HCT116 (cell line): ENCODE measurements at regions of chr6 and their contacts with region 1.

Region 1: DNA sequence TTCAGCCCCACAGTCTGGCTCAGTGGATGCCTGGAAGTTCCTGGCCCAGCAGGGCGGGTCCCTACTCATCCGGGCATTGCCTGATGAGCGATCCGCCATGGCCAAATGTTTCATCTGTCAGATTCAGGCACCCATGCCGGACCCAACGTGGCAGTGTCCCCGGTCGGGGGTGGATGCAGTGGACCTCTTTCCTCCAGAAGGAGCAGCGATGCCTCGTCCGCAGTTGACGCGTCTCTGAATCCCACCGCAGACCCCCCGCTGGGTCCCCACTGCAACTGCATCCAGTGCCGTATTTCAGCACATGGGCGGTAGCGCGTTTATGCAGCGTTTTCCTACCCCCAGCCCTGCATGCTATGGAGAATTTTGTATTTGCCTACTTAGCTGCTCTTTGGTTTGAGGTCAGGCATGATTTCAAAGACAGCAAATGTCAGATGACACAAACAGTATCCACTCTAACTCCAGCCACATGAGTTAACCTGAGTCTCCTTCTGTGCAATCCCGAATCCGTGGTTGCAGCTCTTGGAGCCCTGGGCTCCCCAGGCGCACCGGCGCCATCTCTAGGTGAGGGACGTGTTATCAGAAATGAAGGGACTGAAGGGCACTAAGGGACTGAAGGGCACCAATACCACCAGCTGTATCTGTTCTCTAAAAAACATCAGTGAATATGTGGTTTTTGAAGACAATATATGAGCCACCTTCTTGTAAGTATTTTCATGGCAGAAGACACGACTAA is 72.6 kb upstream of the THBS2 start:
- DNase-seq: peak; percentile 44
- ATAC-seq: peak; percentile 92
- H3K4me3 ChIP-seq: no peak overlapping the region
- H3K27ac ChIP-seq: no peak overlapping the region
- H3K4me1 ChIP-seq: no peaks in the 10 kb centered on the region
- H3K27me3 ChIP-seq: no peaks in the 10 kb centered on the region
- CTCF ChIP-seq: peak; percentile 68 to 87 (median 77)
- POLR2A ChIP-seq: no peak
- RAD21 ChIP-seq: peak; percentile 95

Region 2: GRCh38 chr6:168895102-168895812 is 431.0 kb before region 1 on chr6:
- CTCF ChIA-PET with region 1: no interaction called
- POLR2A ChIA-PET with region 1: no interaction called
- RAD21 ChIA-PET with region 1: no interaction called
- intact Hi-C with region 1: loop called (anchors 2 kb)
- DNase-seq: peak; percentile 43
- ATAC-seq: peak; percentile 96
- H3K4me3 ChIP-seq: 0 out of 4 replicates have a peak overlapping the region, but pooled peaks have one; percentile 7 to 29
- H3K27ac ChIP-seq: no peak overlapping the region
- H3K4me1 ChIP-seq: peaks cover 0 to 12% of the 10 kb centered on the region in 2 experiments; a peak in 2 of 4 replicates
- H3K27me3 ChIP-seq: no peaks in the 10 kb centered on the region
- CTCF ChIP-seq: peak; percentile 89 to 93 (median 92)
- POLR2A ChIP-seq: no peak
- RAD21 ChIP-seq: peak; percentile 94